ENCODE measurements at regions of chr1 and their contacts with region 1.

Region 1: GRCh38 chr1:27789540-27790041 is 16.6 kb downstream of the STX12 start:
- DNase-seq: no peak
- H3K4me3 ChIP-seq: no peak overlapping the region
- H3K27ac ChIP-seq: peak overlapping the region; percentile 77 to 81
- H3K4me1 ChIP-seq: no peaks in the 10 kb centered on the region
- H3K27me3 ChIP-seq: no peaks in the 10 kb centered on the region
- CTCF ChIP-seq: no peak
- POLR2A ChIP-seq: no peak

Region 2: GRCh38 chr1:28044399-28044798 is 254.8 kb after region 1 on chr1:
- intact Hi-C with region 1: loop called (anchors 5 kb)
- DNase-seq: no peak
- H3K4me3 ChIP-seq: no peak overlapping the region
- H3K27ac ChIP-seq: no peak overlapping the region
- H3K4me1 ChIP-seq: no peaks in the 10 kb centered on the region
- H3K27me3 ChIP-seq: no peaks in the 10 kb centered on the region
- CTCF ChIP-seq: no peak
- POLR2A ChIP-seq: no peak

Measured in breast epithelium (tissue), 4 donors.